ENCODE measurements at regions of chr17 and their contacts with region 1.

Region 1: DNA sequence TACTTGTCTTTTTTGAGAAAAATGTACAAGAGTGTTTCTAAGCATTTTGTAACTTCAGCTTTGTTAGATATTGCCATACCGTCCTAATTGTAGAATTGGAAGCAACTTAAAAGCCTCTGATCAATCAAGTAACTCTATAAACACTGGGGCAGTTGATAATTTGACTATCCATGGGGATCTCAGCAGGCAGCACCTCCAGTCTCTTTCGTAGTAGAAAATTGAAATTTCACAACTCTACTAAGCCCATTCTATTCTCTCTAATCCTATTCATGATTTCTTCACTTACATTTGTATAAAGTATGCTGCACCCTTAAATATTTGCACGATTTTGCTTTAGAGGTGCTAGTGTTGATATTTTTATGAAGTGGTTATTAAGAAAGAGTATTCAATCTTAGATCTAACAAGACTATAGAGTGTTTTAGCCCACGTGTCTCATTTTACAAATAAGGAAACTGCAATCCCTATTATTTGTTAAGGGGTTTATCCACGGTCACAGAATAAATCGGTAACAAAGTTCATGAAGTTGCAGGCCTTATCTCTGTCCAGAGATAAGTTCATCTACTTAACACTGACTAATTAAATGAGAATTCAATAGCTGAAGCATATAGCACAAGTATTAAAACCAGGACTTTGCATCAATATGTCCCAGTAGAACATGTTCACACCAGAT is 10.9 kb downstream of the ABCA6 start:
- DNase-seq: no peak
- H3K4me3 ChIP-seq: no peak overlapping the region
- H3K27ac ChIP-seq: no peak overlapping the region
- H3K4me1 ChIP-seq: no peaks in the 10 kb centered on the region
- H3K27me3 ChIP-seq: no peaks in the 10 kb centered on the region
- CTCF ChIP-seq: no peak

Region 2: DNA sequence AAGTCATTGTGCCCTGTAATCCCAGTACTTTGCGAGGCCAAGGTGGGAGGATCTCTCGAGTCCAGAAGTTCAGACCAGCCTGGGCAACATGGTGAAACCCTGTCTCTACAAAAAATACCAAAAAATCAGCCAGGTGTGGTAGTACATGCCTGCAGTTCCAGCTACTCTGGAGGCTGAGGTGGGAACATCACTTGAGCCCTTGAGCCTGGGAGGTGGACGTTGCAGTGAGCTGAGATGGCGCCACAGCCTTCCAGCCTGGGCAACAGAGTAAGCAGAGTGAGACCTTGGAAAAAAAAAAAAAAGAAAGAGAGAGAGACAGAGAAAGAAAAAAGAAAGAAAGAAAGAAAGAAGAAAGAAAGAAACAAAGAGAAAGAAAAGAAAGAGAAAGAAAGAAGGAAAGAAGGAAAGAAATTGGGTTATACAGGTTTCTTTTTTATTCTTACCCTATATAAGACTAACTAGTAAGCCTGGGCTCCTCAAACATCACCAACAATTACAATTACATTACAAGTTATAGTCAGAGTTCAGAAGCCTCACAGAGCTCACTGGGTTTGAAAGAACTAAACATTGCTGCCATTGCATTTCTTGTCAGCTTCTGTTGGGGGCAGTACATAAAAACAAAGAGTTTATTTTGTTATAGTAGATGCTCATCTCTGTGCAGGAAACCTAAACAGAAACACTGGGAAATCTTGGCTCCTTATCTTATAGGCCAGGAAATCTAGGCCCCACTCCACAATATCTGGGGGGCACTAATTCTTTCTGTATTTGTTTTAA is 63.3 kb before region 1 on chr17:
- intact Hi-C with region 1: no loop called
- DNase-seq: no peak
- H3K4me3 ChIP-seq: no peak overlapping the region
- H3K27ac ChIP-seq: no peak overlapping the region
- H3K4me1 ChIP-seq: no peaks in the 10 kb centered on the region
- H3K27me3 ChIP-seq: no peaks in the 10 kb centered on the region
- CTCF ChIP-seq: no peak

Region 3: GRCh38 chr17:69084911-69085310 is 45.9 kb before region 1 on chr17:
- intact Hi-C with region 1: loop called (anchors 10 kb)
- DNase-seq: no peak
- H3K4me3 ChIP-seq: no peak overlapping the region
- H3K27ac ChIP-seq: no peak overlapping the region
- H3K4me1 ChIP-seq: no peaks in the 10 kb centered on the region
- H3K27me3 ChIP-seq: no peaks in the 10 kb centered on the region
- CTCF ChIP-seq: peak; percentile 28

Region 4: GRCh38 chr17:69170377-69170776 is 39.6 kb after region 1 on chr17:
- intact Hi-C with region 1: no loop called
- DNase-seq: no peak
- H3K4me3 ChIP-seq: no peak overlapping the region
- H3K27ac ChIP-seq: peak overlapping the region; percentile 16
- H3K4me1 ChIP-seq: peaks cover 5% of the 10 kb centered on the region
- H3K27me3 ChIP-seq: no peaks in the 10 kb centered on the region
- CTCF ChIP-seq: no peak